Activated T-helper 1 cell treated with anti-CD3 and anti-CD28 coated beads, Interleukin-12 subunit alpha, Interleukin-12 subunit beta, Interleukin-2, Interleukin-4 antibody, amounts not matched to agents 30 ng/mL and 10 ng/mL and 1 ng/mL, durations not matched to agents 14 hours and 24 hours and 36 hours (primary cell): ENCODE measurements at regions of chr4 and their contacts with region 1.

Region 1: GRCh38 chr4:80072744-80073472 is at the start of gene ANTXR2:
- DNase-seq: peak; percentile 73
- H3K4me3 Mint-ChIP-seq: peak within 1 kb of the TSS; percentile 99
- H3K27ac Mint-ChIP-seq: peak within 1 kb of the TSS; percentile 98
- H3K4me1 Mint-ChIP-seq: peaks cover 78% of the 10 kb centered on the region
- H3K27me3 Mint-ChIP-seq: peaks cover 1% of the 10 kb centered on the region
- total RNA-seq, gene ANTXR2: 24.9 and 29.8 TPM in 2 replicates

Region 2: GRCh38 chr4:78656968-78657445 is 1415.9 kb before region 1 on chr4:
- intact Hi-C with region 1: loop called (anchors 5 kb)
- DNase-seq: peak; percentile 24
- H3K4me3 Mint-ChIP-seq: peak overlapping the region; percentile 51
- H3K27ac Mint-ChIP-seq: peak overlapping the region; percentile 48
- H3K4me1 Mint-ChIP-seq: peaks cover 61% of the 10 kb centered on the region
- H3K27me3 Mint-ChIP-seq: no peaks in the 10 kb centered on the region

Region 3: DNA sequence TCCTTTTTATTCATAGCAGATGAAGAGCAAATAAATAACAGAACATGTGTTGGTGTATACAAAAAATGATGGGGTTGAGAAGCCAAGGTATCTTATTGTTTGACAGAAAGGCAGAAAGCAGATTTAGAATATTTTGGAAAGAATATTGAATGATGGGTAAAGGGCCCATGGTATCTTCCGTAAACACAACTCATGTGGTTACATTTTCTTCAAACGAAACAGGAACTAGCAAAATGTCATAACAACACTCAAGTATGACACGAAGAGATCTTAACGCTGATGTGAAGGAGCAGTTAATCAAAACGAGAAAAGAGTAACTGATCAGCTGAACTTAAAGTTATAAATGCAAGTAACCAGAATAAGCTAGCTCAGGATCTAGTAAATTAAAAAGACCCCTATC is 469.2 kb before region 1 on chr4:
- intact Hi-C with region 1: loop called (anchors 10 kb)
- DNase-seq: no peak
- H3K4me3 Mint-ChIP-seq: no peak overlapping the region
- H3K27ac Mint-ChIP-seq: peak overlapping the region; percentile 7
- H3K4me1 Mint-ChIP-seq: peaks cover 11% of the 10 kb centered on the region
- H3K27me3 Mint-ChIP-seq: peaks cover 4% of the 10 kb centered on the region

Region 4: DNA sequence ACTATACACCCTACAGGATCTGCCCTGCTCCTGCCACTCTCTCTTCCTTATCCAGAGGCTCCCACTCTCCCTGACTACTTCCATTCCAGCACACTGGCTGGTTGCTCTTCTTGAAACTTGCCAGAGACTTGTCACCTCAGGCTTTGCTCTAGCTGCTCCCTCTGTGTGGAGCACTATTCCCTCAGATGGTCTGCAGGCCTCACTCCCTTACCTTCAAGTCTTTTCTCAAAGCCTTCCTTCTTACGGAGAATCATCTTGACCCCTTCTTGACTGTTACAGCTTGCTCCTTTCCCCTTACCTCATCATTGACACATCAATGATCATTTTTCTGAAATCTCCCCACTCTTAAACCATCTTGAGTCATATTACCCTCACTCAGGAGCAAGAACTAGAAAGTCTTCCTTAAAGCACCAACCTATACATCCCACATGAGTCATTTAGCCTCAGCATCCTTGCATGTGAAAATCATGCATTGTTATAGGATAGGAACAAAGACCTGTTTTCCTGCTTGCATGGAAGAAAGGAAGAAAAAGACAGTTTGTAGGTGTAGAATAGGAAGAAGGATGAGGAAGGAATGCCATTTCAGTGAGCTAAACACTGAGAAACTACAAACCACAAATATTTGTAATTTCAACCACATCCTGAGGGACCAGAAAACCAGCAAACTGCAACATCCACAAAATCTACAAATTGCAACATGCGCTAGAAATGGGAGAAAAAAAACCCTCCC is 55.6 kb before region 1 on chr4:
- intact Hi-C with region 1: loop called (anchors 2 kb)
- DNase-seq: no peak
- H3K4me3 Mint-ChIP-seq: no peak overlapping the region
- H3K27ac Mint-ChIP-seq: peak overlapping the region; percentile 57
- H3K4me1 Mint-ChIP-seq: peaks cover 19% of the 10 kb centered on the region
- H3K27me3 Mint-ChIP-seq: no peaks in the 10 kb centered on the region

Region 5: DNA sequence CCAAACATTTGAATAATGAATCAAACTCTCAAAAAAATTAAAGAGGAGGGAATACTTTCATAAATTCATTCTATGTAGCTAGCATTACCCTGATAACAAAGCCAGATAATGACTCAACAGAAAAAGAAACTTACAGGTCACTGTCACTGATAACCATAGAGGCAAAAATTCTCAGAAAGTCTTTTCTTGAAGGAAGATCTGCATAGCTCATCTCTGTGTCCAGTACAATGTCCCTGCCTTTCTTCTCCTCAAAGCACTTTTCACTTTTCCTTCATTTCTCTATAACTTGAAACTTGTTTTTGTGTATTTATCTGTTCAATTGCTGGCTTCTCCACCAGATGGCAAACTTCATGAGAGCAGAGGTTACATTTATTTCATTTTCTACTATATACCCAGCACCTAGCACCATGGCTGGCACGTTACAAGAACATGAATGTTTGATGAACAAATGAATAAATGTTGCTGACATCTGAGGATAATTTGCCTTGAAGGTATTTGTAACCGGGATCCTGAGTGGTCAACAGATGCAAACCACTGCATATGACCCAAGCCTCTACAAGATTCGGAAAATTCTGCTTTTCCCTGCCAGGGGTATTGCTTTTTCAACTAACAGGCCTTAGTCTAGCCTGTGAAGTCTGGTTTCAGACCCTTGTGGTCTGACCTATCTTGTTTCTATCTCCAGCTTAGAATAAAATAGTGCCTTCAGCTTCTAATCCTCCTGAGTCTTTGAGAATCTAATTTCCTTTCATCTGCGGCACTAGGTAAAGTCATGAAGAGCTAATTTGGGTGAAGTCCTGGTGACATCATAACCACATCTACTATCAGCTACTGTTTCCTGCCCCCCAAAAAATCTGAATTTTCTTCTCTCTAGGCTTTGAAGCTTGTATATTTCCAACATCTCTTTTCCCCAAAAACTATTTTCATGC is 52.6 kb after region 1 on chr4:
- intact Hi-C with region 1: loop called (anchors 1 kb)
- DNase-seq: peak; percentile 17
- H3K4me3 Mint-ChIP-seq: peak overlapping the region; percentile 71
- H3K27ac Mint-ChIP-seq: peak overlapping the region; percentile 92
- H3K4me1 Mint-ChIP-seq: peaks cover 68% of the 10 kb centered on the region
- H3K27me3 Mint-ChIP-seq: no peaks in the 10 kb centered on the region

Region 6: GRCh38 chr4:80173401-80173800 is 100.5 kb after region 1 on chr4:
- intact Hi-C with region 1: loop called (anchors 1 kb)
- DNase-seq: peak; percentile 66
- H3K4me3 Mint-ChIP-seq: peak overlapping the region; percentile 50
- H3K27ac Mint-ChIP-seq: peak overlapping the region; percentile 92
- H3K4me1 Mint-ChIP-seq: peaks cover 68% of the 10 kb centered on the region
- H3K27me3 Mint-ChIP-seq: no peaks in the 10 kb centered on the region

Region 7: GRCh38 chr4:81494031-81494431 is 1421.1 kb after region 1 on chr4:
- intact Hi-C with region 1: loop called (anchors 10 kb)
- DNase-seq: no peak
- H3K4me3 Mint-ChIP-seq: peak overlapping the region; percentile 50
- H3K27ac Mint-ChIP-seq: peak overlapping the region; percentile 25
- H3K4me1 Mint-ChIP-seq: peaks cover 43% of the 10 kb centered on the region
- H3K27me3 Mint-ChIP-seq: peaks cover 10% of the 10 kb centered on the region